ENCODE measurements at regions of chr4 and their contacts with region 1.

Region 1: GRCh38 chr4:77007358-77008191 is 58.0 kb downstream of the SEPTIN11 start:
- DNase-seq: no peak
- H3K4me3 Mint-ChIP-seq: no peak overlapping the region
- H3K27ac Mint-ChIP-seq: peak overlapping the region; percentile 69
- H3K4me1 Mint-ChIP-seq: peaks cover 38% of the 10 kb centered on the region
- H3K27me3 Mint-ChIP-seq: peaks cover 15% of the 10 kb centered on the region

Region 2: GRCh38 chr4:76977736-76978350 is 29.7 kb before region 1 on chr4:
- CTCF ChIA-PET with region 1: no interaction called
- POLR2A ChIA-PET with region 1: no interaction called
- DNase-seq: no peak
- H3K4me3 Mint-ChIP-seq: no peak overlapping the region
- H3K27ac Mint-ChIP-seq: no peak overlapping the region
- H3K4me1 Mint-ChIP-seq: peaks cover 34% of the 10 kb centered on the region
- H3K27me3 Mint-ChIP-seq: peaks cover 31% of the 10 kb centered on the region

Region 3: DNA sequence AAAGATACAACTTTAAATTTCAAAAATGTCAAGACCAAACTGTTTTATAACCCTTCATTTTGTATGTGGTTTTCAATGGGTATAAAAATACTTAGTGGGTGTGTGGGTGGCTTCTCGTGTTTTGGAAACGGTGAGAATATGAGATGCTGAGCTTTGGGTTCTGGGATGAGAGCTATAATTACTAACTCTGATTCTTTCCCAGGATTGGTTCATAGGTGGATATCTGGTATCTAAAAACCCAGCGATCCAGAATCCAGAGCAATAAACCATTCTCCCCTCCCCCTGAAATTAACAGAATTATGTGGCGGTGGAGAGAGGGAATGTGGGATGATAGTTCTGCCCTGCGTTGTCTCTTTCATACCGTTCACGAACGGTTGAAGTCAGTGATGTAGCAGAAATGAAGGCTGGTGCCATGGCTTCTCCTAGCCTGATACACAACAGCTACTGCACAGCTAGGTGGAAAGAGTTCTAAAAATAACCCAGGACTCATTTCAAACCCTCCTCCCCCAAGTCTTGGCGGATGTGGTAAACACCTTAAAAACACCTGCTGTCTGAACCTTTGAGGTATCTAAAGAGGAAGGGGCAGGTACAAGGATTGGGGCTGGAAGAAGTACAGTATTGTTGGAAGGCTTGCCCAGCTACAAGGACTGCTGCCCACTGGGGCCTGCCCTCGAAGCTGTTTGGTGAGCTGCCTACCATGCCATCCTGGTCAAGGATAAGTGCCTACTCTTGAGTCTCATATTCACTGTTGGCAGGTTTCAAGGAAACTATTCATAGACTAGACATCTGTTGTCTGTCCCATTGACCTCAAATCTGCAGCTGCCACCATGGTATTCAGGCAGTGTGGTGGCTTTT is 13.6 kb before region 1 on chr4:
- CTCF ChIA-PET with region 1: interaction called, 14 read pairs
- POLR2A ChIA-PET with region 1: no interaction called
- DNase-seq: peak; percentile 84
- H3K4me3 Mint-ChIP-seq: peak overlapping the region; percentile 52
- H3K27ac Mint-ChIP-seq: peak overlapping the region; percentile 87
- H3K4me1 Mint-ChIP-seq: peaks cover 50% of the 10 kb centered on the region
- H3K27me3 Mint-ChIP-seq: peaks cover 28% of the 10 kb centered on the region

Region 4: DNA sequence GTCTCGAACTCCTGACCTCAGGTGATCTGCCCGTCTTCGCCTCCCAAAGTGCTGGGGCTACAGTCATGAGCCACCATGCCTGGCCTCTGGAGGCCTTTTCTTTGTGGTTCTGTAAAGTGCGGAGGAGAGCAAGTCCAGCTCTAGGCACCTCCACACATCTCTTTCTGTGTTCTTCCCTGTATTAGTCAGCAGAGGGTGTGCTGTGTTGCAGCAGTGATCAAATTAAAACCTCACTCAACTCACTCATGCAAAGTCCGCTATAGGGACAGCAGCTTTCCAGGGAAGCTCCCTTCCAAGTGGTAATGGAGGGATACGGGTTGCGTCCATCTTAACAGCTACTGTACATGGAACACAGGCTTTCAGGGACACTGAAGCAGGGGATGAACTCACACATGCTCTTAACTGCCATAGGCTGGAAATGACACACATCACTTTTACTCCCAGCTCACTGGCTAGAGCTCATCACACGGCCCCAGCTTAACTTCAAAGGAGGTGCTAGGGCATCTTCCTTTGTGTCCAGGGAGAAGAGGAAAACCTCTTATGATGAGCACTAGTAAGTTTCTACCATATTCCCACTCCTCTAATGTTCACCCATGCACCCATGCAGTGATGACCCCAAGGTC is 113.4 kb after region 1 on chr4:
- CTCF ChIA-PET with region 1: no interaction called
- POLR2A ChIA-PET with region 1: no interaction called
- DNase-seq: no peak
- H3K4me3 Mint-ChIP-seq: no peak overlapping the region
- H3K27ac Mint-ChIP-seq: no peak overlapping the region
- H3K4me1 Mint-ChIP-seq: peaks cover 3% of the 10 kb centered on the region
- H3K27me3 Mint-ChIP-seq: peaks cover 2% of the 10 kb centered on the region

Measured in activated CD4-positive, alpha-beta T cell treated with anti-CD3 and anti-CD28 coated beads, Interleukin-2, amount 10 ng/mL, durations not matched to agents 7 days and 5 days (primary cell).